BJ (cell line): ENCODE measurements at regions of chr7 and their contacts with region 1.

Region 1: DNA sequence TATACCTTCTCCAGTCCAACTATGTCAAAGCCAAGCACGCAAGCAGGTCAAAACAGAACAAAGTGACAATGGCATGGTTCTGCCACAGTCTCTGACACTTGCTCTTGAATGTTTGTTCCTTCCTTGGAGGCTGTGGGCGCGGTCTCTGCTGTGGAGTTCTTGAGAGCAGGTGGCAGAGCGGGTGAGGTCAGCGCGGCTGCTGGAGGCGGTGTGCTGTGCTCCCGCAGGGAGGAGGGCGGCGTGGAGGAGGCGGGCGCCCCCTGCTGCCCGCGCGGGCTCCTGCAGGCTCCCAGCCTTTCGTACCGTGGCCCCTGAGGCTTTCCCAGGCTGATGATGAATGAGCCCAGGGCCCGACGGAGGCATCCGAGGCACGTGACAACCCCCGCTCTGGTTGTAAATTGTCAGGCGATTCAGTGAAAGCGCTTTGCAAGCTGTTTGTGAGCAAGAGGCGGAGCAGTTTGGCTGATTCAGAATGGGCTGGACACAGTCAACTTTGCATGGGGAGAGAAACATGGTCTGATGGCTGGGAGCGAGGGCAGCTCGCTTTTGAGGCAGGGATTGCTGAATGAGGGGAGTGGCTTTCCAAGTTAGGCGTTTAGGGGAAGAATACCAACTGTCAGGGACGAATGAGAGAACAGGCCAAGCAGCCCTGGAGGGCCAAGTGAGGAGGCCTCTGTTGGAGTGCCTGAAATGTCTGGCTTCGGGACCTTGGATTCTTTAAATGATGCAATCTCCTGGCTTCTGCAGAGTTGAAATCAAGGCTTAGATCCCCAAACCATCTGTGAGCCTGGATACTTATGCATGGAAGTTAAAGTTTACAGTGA is 46.6 kb downstream of the CDHR3 start:
- DNase-seq: peak; percentile 97
- H3K4me3 ChIP-seq: no peak overlapping the region
- H3K27me3 ChIP-seq: no peaks in the 10 kb centered on the region; the same call in 1 of the 2 replicates
- CTCF ChIP-seq: peak; percentile 93

Region 2: DNA sequence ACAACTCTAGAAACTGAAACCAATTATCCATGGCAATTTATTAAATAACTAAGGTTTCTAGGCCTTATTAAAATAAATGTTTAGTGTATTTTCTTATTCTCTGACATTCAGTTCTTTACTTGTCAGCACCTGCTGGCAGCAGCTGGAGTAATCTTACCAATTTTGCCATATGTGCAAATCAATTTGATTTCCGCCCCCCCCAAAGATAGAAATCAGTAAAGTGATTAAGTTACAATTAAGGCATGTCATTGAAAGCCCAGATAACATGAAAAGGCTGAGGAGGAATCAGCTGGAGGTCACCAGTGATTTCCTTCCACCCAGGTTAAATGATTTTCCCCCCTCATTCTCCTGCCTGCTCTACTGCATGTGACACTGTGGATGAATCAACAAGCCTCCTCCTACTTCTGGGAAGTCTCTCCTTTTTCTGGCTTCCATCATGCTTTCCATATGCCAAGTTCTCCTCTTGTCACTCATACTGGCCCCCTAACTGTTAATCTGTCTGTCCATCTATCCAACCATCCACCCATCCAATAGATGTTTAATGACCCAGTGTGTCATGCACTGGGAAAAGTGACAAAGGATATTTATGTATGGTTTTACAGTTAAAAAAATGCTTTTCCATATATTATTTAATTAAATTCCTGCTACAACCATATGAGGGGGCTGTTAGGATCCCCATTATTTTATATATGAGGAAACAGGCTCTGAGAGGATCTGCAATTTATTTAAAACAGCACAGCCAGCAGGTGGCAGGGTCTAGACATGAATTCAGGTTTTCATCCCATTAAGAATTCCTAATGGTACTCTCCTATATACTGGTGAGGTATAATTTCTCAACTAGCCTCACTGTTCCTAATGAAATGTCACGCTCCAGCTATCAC is 249.7 kb before region 1 on chr7:
- CTCF ChIA-PET with region 1: interaction called, 22 read pairs
- POLR2A ChIA-PET with region 1: no interaction called
- DNase-seq: no peak
- H3K4me3 ChIP-seq: no peak overlapping the region
- H3K27me3 ChIP-seq: no peaks in the 10 kb centered on the region
- CTCF ChIP-seq: peak; percentile 52

Region 3: DNA sequence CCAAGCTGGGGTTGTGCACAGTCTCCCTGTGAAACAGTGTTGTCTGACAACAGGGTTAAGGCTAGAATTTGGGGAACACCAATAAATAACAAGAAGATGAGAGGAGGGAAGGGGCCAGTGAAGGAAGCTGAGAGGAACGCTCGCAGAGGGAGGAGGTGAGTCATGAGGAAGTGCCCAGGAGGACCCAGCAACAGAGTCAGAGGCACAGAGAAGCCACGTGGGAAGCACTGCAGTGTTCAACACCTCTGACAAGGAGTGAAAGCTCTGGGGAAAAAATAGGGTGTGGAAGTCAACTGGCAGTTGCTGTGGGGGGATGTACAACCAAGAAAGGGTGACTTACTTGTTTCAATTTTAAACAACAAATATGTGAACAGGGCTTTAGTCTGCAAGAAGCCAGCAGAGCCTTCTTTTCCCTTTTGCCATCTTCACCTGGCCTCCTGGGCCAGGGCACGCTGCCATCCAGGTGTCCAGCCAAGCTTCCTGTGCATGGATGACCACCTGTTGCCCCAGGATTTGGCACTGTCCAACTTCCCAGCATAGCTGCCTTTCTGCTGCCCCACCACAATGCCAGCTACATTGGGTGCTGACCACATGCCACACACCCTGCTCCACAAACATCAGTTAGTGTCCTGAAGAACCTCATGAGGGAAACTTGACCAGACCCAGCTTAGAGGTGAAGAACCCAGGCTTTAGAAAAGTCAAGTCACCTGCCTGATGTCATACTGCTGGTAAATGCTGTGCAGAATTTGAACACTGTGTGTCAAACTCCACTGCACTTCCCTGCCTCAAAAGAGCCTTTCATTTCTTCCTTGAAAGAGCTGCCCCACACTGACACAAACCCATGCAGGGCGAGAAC is 202.8 kb before region 1 on chr7:
- CTCF ChIA-PET with region 1: no interaction called
- POLR2A ChIA-PET with region 1: no interaction called
- DNase-seq: no peak
- H3K4me3 ChIP-seq: no peak overlapping the region
- H3K27me3 ChIP-seq: no peaks in the 10 kb centered on the region
- CTCF ChIP-seq: no peak

Region 4: DNA sequence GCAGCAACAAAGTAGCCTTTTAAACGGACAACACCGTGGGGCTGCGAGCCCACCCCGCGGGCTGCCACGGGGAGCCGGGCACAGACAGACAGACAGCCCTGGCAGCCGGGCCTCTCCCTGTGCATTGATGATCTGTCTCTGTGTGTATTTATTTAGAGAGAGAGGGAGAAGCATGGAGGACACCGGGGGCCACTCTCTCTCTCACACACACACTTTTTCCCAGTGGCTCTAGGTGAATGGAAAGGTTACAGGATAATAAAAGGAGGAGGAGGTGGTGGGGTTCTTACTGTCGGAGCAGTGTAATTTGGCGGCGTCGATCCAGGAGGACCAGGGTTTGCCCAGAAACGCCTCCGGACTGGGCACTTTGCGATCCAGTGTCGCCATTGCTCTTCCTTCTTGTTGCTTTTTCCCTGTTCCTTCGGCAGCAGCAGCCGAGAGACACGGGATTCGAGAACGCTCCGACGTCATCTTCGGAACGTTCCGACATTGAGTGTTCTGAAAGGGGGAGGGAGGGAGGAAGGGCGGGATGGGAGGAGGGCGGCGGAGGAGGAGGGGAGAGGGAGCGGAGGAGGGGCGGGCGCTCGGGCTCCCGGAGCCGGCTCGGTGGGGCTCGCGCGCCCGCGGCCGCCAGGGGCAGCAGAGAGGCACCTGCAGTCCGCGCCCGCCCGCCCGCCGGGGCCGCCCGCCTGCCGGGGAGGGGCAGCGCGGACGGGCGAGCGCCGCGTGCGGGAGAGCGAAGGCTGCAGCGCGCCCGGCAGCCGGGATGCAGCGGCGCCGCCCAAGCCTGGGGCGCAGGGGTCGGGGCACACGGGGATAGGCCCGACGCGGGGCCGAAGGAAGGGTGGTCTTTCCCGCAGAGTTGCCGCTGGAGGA is 133.3 kb before region 1 on chr7 and contains the start of gene ATXN7L1:
- CTCF ChIA-PET with region 1: interaction called, 11 read pairs
- POLR2A ChIA-PET with region 1: no interaction called
- DNase-seq: peak; percentile 80
- H3K4me3 ChIP-seq: peak within 1 kb of the TSS; percentile 79
- H3K27me3 ChIP-seq: no peaks in the 10 kb centered on the region
- CTCF ChIP-seq: peak; percentile 23; the same call in 1 of the 2 replicates
- polyA plus RNA-seq, gene ATXN7L1: 2.7 and 4.6 TPM in 2 replicates

Region 5: GRCh38 chr7:105934572-105935185 is 74.9 kb before region 1 on chr7:
- CTCF ChIA-PET with region 1: interaction called, 13 read pairs
- POLR2A ChIA-PET with region 1: no interaction called
- DNase-seq: no peak
- H3K4me3 ChIP-seq: no peak overlapping the region
- H3K27me3 ChIP-seq: no peaks in the 10 kb centered on the region
- CTCF ChIP-seq: peak; percentile 33; the same call in 1 of the 2 replicates

Region 6: DNA sequence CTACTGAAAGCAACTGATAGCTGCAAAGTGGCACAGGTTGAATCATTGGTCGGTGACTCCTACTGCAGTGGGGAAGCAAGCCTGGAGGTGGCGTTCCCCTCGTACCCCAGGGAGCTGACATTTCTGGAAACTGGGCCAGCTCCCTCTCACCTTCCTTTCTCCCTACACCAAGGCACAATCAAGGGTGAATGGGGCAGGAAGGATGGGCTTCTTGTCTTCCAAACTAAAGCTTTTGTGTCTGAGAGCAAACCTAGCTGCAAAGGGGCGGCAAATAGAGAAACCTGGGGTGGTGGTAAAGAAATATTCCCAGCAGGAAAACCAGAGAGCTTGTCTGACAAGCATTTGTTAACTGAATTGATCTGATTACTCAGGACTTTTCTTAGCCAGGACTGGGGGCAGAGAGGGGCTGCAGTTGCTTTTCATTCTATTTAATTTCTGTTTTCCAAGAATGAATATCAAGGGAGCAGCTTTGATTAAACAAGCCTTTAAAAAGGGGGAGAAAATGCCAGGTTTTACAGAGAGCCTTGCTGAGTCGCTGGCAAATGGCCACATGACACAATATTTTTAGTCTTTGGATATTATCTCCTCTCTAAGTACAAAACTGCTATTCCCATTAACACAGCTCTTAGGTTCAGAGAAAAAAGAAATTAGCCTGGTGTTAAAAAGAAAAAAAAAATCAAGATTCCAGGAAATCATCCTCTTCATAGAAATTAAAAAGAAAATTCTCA is 18.7 kb before region 1 on chr7:
- CTCF ChIA-PET with region 1: interaction called, 10 read pairs
- POLR2A ChIA-PET with region 1: no interaction called
- DNase-seq: no peak
- H3K4me3 ChIP-seq: no peak overlapping the region
- H3K27me3 ChIP-seq: peaks cover 8% of the 10 kb centered on the region; the same call in 1 of the 2 replicates
- CTCF ChIP-seq: no peak

Region 7: GRCh38 chr7:106285051-106285854 is 275.6 kb after region 1 on chr7:
- CTCF ChIA-PET with region 1: no interaction called
- POLR2A ChIA-PET with region 1: no interaction called
- DNase-seq: peak; percentile 91
- H3K4me3 ChIP-seq: peak overlapping the region; percentile 71
- H3K27me3 ChIP-seq: no peaks in the 10 kb centered on the region
- CTCF ChIP-seq: no peak